Activated T-helper 1 cell treated with anti-CD3 and anti-CD28 coated beads, Interleukin-12 subunit alpha, Interleukin-12 subunit beta, Interleukin-2, Interleukin-4 antibody, amounts not matched to agents 30 ng/mL and 10 ng/mL and 1 ng/mL, durations not matched to agents 14 hours and 24 hours and 36 hours (primary cell): ENCODE measurements at regions of chr16 and their contacts with region 1.

Region 1: DNA sequence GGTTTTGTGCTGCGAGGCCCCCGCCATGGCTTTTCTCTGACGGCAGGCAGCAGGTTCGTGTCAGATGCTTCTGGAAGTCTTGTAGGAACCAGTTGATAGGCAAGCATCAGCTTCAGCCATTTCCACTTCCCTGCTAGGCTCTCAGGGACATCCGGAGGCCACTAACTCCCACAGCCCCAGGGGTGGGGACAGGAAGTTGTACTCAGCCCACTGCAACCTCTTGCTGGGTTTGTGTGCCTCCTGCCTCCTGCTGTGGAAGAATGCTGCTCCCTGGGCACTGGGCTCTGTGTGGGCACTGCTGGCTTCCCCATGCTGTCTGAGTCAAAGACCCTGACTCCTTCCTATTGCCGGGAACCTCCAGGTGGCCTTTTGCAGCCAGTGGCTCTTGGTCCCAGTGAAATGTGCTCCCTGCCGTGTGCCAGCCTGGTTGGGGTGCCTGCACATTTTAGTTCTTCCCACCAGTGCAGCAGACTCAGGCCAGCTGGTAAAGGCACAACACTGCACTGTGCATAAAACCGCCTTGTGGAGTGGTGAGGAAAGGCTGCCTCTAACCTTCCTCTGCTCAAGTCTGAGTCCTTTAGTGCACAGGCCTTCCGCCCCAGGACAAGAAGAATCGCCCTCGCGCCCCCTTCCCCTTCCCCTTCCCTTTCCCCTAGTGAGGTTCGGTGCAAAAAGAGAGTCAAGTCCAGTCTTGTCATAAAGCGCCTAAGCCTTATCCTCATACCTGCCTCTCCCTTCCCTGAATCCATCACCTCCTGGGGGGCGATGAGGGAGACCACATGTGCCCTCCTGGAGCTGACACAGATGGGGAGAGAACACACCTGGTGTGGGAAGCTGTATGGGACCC is 16.6 kb downstream of the LDHD start:
- DNase-seq: peak; percentile 41
- H3K4me3 Mint-ChIP-seq: peak overlapping the region; percentile 46
- H3K27ac Mint-ChIP-seq: peak overlapping the region; percentile 95
- H3K4me1 Mint-ChIP-seq: peaks cover 83% of the 10 kb centered on the region
- H3K27me3 Mint-ChIP-seq: no peaks in the 10 kb centered on the region

Region 2: GRCh38 chr16:74984535-74985296 is 115.3 kb before region 1 on chr16 and contains the start of gene WDR59:
- intact Hi-C with region 1: loop called (anchors 1 kb)
- DNase-seq: peak; percentile 99
- H3K4me3 Mint-ChIP-seq: peak within 1 kb of the TSS; percentile 90
- H3K27ac Mint-ChIP-seq: peak within 1 kb of the TSS; percentile 90
- H3K4me1 Mint-ChIP-seq: peaks cover 14% of the 10 kb centered on the region
- H3K27me3 Mint-ChIP-seq: peaks cover 3% of the 10 kb centered on the region
- total RNA-seq, gene WDR59: 85.9 and 95.3 TPM in 2 replicates

Region 3: GRCh38 chr16:75038036-75038858 is 61.7 kb before region 1 on chr16:
- intact Hi-C with region 1: no loop called
- DNase-seq: no peak
- H3K4me3 Mint-ChIP-seq: no peak overlapping the region
- H3K27ac Mint-ChIP-seq: peak overlapping the region; percentile 52
- H3K4me1 Mint-ChIP-seq: peaks cover 39% of the 10 kb centered on the region
- H3K27me3 Mint-ChIP-seq: no peaks in the 10 kb centered on the region

Region 4: DNA sequence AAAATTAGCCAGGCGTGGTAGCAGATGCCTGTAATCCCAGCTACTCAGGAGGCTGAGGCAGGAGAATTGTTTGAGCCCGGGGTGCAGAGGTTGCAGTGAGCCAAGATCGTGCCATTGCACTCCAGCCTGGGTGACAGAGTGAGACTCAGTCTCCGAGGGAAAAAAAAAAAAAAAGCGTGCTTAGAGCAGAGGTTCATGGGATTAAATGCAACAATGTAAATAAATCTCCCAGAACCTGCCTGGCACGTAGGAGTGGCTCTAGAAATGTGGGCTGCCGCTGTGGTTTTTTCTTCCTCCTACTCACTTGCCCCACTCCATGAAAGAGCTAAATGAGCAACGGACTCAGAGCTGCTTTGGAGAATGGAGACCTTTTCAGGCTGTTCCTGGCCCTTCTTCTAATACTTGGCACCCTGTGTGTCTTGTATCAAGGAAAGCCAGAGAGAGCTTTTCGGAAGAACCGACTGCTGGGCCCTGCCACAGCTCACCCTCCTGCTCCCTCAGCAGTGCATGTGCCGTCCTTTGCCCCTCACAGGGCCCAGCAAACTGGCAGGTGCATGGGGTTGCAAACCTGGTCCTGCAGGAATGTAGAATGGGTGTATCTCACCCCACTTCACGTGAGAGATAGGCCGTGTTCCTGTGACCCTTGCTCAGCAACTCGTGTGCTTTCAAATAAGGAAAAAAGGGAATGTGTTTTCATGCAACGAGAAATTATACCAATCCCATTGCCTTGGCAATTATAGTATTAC is 35.4 kb before region 1 on chr16:
- intact Hi-C with region 1: loop called (anchors 1 kb)
- DNase-seq: peak; percentile 17
- H3K4me3 Mint-ChIP-seq: peak overlapping the region; percentile 70
- H3K27ac Mint-ChIP-seq: peak overlapping the region; percentile 85
- H3K4me1 Mint-ChIP-seq: peaks cover 79% of the 10 kb centered on the region
- H3K27me3 Mint-ChIP-seq: no peaks in the 10 kb centered on the region

Region 5: DNA sequence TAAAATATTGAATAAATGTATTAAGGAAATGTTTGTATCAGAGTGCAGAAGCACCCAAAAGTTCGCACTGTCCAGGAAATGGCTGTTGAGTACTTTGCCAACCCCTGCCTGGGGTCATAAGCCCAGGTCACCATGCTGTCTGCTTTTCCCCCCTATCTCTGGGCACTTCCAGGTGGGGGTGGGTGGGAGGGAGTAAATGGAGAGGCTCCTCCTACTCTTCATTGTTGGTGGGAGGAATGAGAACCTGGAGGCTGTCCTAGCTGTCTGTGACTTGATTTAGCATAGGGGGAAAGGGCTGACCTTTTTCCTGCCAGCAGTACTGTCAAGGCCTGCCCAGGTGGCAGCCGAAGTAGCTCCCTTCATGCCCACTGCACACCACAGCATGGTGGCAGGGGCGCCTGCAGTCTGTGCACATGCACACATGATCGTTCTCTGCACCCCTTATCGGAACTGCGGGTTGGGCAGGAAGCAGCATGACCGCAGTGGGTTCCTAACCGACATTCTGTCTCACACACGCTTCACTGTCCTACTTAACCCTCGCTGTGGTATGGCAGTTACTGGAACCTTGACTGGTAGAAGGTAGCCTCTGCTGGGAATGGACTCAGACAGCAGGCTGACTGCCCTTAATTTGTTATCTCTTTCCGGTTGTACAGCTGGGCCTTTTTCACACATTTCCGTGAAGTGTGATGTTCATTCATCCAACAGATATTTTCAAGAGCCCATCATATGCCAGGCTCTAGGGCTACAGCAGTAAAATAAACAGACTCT is 24.9 kb before region 1 on chr16:
- intact Hi-C with region 1: loop called (anchors 1 kb)
- DNase-seq: peak; percentile 83
- H3K4me3 Mint-ChIP-seq: peak overlapping the region; percentile 74
- H3K27ac Mint-ChIP-seq: peak overlapping the region; percentile 92
- H3K4me1 Mint-ChIP-seq: peaks cover 78% of the 10 kb centered on the region
- H3K27me3 Mint-ChIP-seq: no peaks in the 10 kb centered on the region

Region 6: GRCh38 chr16:75148311-75149195 is 48.6 kb after region 1 on chr16 and contains the start of gene ZFP1:
- intact Hi-C with region 1: loop called (anchors 1 kb)
- DNase-seq: peak; percentile 90
- H3K4me3 Mint-ChIP-seq: peak within 1 kb of the TSS; percentile 90
- H3K27ac Mint-ChIP-seq: peak within 1 kb of the TSS; percentile 84
- H3K4me1 Mint-ChIP-seq: peaks cover 29% of the 10 kb centered on the region
- H3K27me3 Mint-ChIP-seq: no peaks in the 10 kb centered on the region
- total RNA-seq, gene ZFP1: 12.3 and 14.6 TPM in 2 replicates

Region 7: GRCh38 chr16:77062878-77063671 is 1963.1 kb after region 1 on chr16:
- intact Hi-C with region 1: no loop called
- DNase-seq: no peak
- H3K4me3 Mint-ChIP-seq: no peak overlapping the region
- H3K27ac Mint-ChIP-seq: no peak overlapping the region
- H3K4me1 Mint-ChIP-seq: no peaks in the 10 kb centered on the region
- H3K27me3 Mint-ChIP-seq: peaks cover 1% of the 10 kb centered on the region